ENCODE measurements at regions of chr5 and their contacts with region 1.

Region 1: GRCh38 chr5:52956915-52957747 is 32.0 kb upstream of the ITGA2 start:
- DNase-seq: no peak
- H3K4me3 ChIP-seq: no peak overlapping the region
- H3K27ac ChIP-seq: no peak overlapping the region
- H3K4me1 ChIP-seq: no peaks in the 10 kb centered on the region
- H3K27me3 ChIP-seq: no peaks in the 10 kb centered on the region
- CTCF ChIP-seq: no peak

Region 2: GRCh38 chr5:53041071-53041692 is 84.1 kb after region 1 on chr5:
- CTCF ChIA-PET with region 1: no interaction called
- POLR2A ChIA-PET with region 1: no interaction called
- intact Hi-C with region 1: loop called (anchors 10 kb)
- DNase-seq: no peak
- H3K4me3 ChIP-seq: no peak overlapping the region
- H3K27ac ChIP-seq: no peak overlapping the region
- H3K4me1 ChIP-seq: peaks cover 36% of the 10 kb centered on the region
- H3K27me3 ChIP-seq: no peaks in the 10 kb centered on the region
- CTCF ChIP-seq: no peak